ENCODE measurements at regions of chr2 and their contacts with region 1.

Region 1: GRCh38 chr2:220674033-220674432 is 898.1 kb downstream of the EPHA4 start:
- DNase-seq: no peak

Region 2: GRCh38 chr2:220373878-220374277 is 300.2 kb before region 1 on chr2:
- intact Hi-C with region 1: loop called (anchors 10 kb)
- DNase-seq: no peak

Measured in cardiac septum (tissue), 1 donor.